ENCODE measurements at regions of chr6 and their contacts with region 1.

Region 1: GRCh38 chr6:3929281-3929798 is 80.2 kb downstream of the FAM50B start:
- DNase-seq: no peak
- H3K4me3 Mint-ChIP-seq: no peak overlapping the region
- H3K27ac Mint-ChIP-seq: no peak overlapping the region
- H3K4me1 Mint-ChIP-seq: no peaks in the 10 kb centered on the region
- H3K27me3 Mint-ChIP-seq: no peaks in the 10 kb centered on the region

Region 2: GRCh38 chr6:3742426-3743344 is 186.7 kb before region 1 on chr6:
- CTCF ChIA-PET with region 1: interaction called, 25 read pairs
- POLR2A ChIA-PET with region 1: no interaction called
- DNase-seq: peak; percentile 89
- H3K4me3 Mint-ChIP-seq: peak overlapping the region; percentile 44
- H3K27ac Mint-ChIP-seq: peak overlapping the region; percentile 42
- H3K4me1 Mint-ChIP-seq: peaks cover 17% of the 10 kb centered on the region
- H3K27me3 Mint-ChIP-seq: peaks cover 6% of the 10 kb centered on the region

Region 3: DNA sequence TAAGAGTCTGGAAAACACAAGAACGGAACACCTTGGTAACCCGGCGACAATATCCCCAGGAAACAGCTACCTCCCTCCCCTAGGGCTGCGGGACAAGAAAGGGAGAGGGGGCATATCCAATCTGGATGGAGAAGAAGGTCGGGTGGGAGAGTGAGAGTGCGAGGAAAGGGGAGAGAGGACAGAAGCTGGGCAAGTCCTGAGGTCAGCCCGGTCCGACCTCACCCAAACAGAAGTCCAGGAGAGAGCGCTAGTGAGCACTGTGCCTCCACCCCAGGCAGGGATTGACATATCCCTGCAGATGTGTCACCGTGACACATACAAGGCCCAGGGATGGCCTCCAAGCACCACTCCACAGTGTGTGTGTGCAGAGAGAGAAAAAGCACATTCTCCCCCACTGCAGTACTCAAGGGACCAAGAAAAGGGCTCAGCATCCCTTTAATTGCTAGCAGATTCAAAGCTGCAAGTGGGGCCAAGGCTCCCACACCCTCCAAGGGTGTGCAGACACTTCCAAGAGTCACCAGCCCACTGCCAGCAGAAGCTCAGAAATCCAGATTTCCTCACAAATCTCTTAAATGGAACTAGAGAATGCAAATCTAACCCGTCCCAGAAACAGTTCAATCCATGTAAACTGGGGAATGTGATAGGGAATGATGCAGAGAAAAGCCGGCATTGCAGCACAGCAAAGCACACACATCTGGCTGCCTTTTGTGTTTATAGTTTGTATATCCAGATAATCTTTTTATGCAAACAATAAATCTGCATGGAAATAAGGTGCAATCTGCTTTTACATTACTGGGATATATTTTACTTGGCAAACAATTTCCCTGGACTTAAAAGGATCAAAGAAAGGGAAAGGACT is 180.9 kb before region 1 on chr6:
- CTCF ChIA-PET with region 1: interaction called, 25 read pairs
- POLR2A ChIA-PET with region 1: no interaction called
- DNase-seq: peak; percentile 43
- H3K4me3 Mint-ChIP-seq: no peak overlapping the region
- H3K27ac Mint-ChIP-seq: no peak overlapping the region
- H3K4me1 Mint-ChIP-seq: peaks cover 7% of the 10 kb centered on the region
- H3K27me3 Mint-ChIP-seq: peaks cover 25% of the 10 kb centered on the region

Region 4: DNA sequence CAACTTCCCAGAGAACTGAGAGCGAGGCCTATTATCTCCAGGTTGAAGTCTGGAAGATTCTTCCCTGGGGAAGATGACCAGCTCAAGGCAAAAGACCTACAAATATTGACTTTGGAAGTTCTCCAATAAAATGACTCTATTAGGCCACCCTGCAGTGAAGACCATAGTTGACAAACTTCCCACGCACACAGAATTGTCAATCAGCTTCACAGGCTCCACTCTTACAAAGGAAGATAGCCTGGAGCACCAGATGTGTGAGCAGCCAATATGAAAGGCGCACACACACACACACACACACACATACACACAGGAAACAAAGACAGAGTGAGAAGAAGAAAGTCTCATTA is 33.6 kb after region 1 on chr6:
- CTCF ChIA-PET with region 1: interaction called, 12 read pairs
- POLR2A ChIA-PET with region 1: no interaction called
- DNase-seq: no peak
- H3K4me3 Mint-ChIP-seq: no peak overlapping the region
- H3K27ac Mint-ChIP-seq: no peak overlapping the region
- H3K4me1 Mint-ChIP-seq: peaks cover 1% of the 10 kb centered on the region
- H3K27me3 Mint-ChIP-seq: peaks cover 1% of the 10 kb centered on the region

Region 5: DNA sequence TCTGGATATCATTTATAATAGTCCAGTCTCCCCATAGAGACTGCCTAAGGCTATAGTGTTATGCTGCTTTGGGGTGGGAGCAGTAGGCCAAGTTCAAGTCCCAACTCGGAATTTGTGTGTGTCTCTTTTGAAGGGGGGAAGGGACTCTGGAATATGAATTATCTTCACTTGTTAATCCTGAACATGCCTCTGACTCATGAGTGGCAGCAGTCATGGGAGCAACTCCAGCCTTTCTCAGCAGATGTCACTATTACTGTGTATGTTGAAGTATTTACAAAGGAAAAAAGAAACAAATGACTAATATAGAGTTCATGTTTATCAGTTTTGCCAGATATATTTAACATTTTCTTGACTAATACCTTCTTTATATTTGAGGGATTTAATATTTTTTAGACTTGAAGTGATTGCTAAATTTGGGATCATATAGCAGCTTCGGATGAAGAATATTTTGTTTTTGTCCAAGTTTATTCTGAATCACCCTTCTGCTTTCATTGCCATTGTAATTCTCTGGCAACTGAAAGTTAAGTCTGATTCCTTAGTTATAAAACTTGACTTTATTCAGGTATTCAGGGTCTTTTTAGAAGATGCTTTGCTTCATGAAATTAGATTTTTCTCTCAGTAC is 126.2 kb after region 1 on chr6:
- CTCF ChIA-PET with region 1: no interaction called
- POLR2A ChIA-PET with region 1: no interaction called
- DNase-seq: peak; percentile 26
- H3K4me3 Mint-ChIP-seq: no peak overlapping the region
- H3K27ac Mint-ChIP-seq: peak overlapping the region; percentile 54
- H3K4me1 Mint-ChIP-seq: peaks cover 34% of the 10 kb centered on the region
- H3K27me3 Mint-ChIP-seq: no peaks in the 10 kb centered on the region